Caco-2 (cell line): ENCODE measurements at regions of chr11 and their contacts with region 1.

Region 1: DNA sequence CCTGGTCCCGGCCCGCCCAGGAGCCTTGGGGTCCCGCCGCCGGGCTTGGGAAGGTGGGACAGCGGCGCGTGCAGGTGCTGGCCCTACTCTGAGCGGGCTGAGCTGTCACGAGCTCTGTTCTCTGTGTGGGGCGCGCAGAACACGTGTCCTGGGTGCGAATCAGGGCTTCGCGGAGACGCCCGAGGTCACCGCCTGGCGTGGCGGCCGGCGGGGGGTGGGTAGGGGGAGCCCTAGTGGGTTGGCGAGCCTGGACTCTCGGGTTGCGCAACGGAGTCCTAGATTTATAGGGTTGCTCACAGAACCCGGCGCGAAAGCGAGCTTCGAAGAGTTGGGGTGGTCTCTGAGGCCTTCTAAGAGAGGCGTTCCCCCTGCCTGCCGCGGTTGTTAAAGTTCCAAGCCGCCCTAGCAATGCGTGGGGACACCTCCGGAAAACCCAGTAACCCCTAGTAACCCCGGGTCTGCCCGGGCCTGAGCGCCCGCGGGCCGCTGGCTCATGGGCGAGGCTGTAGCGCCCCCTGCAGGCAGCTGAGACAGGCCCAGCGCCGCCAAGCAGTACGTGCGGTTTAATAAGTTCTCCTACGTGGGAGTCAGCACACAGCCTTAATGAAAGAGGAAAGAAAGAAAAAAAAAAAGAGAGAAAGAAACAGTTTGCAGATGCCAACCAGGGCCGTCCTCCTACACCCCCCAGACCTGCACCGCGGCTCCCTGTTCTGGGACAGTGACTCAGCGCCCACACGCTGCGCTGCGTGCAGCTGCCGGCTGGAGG is 2.8 kb downstream of the ADM start:
- DNase-seq: peak; percentile 83 to 90
- H3K4me3 ChIP-seq: peak overlapping the region; percentile 64
- H3K4me3 Mint-ChIP-seq: peak overlapping the region; percentile 85
- H3K27ac Mint-ChIP-seq: peak overlapping the region; percentile 81
- H3K4me1 ChIP-seq: peaks cover 28% of the 10 kb centered on the region
- H3K4me1 Mint-ChIP-seq: peaks cover 36% of the 10 kb centered on the region
- H3K27me3 ChIP-seq: no peaks in the 10 kb centered on the region
- H3K27me3 Mint-ChIP-seq: peaks cover 3% of the 10 kb centered on the region
- CTCF ChIP-seq: peak; percentile 88 to 97

Region 2: DNA sequence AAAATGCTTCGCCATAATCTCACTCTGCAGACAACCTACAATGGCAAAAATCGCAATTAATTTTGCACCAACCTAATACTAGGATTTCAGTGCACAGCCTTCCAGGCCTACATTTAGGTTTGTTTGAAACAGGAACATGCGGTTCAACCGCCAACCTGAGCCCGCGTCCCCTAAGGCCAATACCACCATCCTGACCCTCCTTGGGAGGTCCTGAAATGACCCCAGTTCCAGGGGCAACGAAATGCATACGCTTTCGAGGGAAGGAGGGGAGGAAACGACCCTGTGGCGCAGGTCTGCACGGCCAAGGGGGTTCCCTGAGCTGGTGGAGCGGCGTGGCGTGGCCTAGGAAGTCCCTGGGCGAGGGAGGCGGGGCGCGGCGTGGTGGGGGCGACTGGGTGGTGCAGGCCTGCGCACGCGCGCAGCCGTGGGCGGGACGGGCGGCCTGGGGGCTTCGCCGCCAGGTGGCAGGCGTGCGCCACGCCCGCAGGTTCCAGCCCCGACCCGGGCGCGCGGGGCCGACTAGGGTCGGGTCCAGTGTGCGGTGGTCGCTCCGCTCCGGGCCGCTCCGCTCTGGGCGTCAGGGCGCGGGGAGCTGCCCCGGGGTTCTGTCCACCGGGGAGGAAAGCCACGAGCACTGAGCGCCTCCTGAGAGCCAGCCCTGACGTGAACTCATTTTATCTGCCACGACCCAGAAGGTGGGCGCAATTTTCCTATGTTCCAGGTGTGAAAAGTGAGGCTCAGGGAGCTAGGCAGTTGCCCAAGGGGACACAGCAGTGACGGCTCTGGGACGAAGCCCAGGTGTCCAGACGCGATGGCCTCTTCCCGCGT is 549.6 kb before region 1 on chr11:
- CTCF ChIA-PET with region 1: interaction called, 6 read pairs
- POLR2A ChIA-PET with region 1: interaction called, 6 read pairs
- intact Hi-C with region 1: loop called (anchors 1 kb)
- DNase-seq: peak; percentile 88 to 93
- H3K4me3 ChIP-seq: peak overlapping the region; percentile 70
- H3K4me3 Mint-ChIP-seq: peak overlapping the region; percentile 86
- H3K27ac Mint-ChIP-seq: peak overlapping the region; percentile 68
- H3K4me1 ChIP-seq: peaks cover 13% of the 10 kb centered on the region
- H3K4me1 Mint-ChIP-seq: peaks cover 32% of the 10 kb centered on the region
- H3K27me3 ChIP-seq: no peaks in the 10 kb centered on the region
- H3K27me3 Mint-ChIP-seq: no peaks in the 10 kb centered on the region
- CTCF ChIP-seq: peak; percentile 43 to 79

Region 3: GRCh38 chr11:10134975-10135481 is 172.6 kb before region 1 on chr11:
- CTCF ChIA-PET with region 1: no interaction called
- POLR2A ChIA-PET with region 1: no interaction called
- intact Hi-C with region 1: no loop called
- DNase-seq: no peak
- H3K4me3 ChIP-seq: no peak overlapping the region
- H3K4me3 Mint-ChIP-seq: no peak overlapping the region
- H3K27ac Mint-ChIP-seq: no peak overlapping the region
- H3K4me1 ChIP-seq: no peaks in the 10 kb centered on the region
- H3K4me1 Mint-ChIP-seq: peaks cover 6% of the 10 kb centered on the region
- H3K27me3 ChIP-seq: no peaks in the 10 kb centered on the region
- H3K27me3 Mint-ChIP-seq: no peaks in the 10 kb centered on the region
- CTCF ChIP-seq: no peak

Region 4: DNA sequence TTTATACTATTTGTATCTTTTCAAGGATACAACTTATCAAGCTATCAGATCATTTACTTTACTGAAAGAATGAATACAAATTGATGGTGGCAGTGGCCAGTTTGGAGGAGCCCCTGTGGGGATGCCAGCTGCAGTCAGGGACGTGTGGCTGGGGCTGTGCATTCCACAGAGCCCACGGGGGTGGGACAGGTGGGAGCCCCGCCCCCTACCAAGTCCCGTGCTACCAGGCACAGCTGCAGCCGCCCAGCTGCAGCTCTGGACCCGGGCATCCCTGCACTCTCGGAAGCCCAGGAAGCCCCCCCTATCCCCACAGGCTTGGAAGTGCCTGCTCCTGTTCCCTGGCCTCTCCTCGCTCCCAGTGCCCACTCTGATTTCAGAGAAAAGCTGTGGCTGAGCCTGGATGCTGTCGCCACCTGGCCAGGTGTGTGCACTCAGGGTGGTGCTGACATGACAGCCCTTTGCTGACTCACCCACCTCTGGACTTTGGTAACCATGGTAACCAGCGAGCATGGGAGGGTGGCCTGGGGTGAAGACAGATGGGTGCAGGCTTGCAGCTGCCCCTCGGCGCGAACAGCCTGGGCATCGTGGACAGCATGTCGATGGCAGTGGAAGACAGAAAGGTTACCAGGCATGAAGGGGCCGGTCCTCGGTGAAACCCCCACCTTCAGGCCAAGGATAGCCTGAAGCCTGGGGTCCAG is 151.7 kb before region 1 on chr11:
- CTCF ChIA-PET with region 1: no interaction called
- POLR2A ChIA-PET with region 1: no interaction called
- intact Hi-C with region 1: no loop called
- DNase-seq: no peak
- H3K4me3 ChIP-seq: no peak overlapping the region
- H3K4me3 Mint-ChIP-seq: no peak overlapping the region
- H3K27ac Mint-ChIP-seq: no peak overlapping the region
- H3K4me1 ChIP-seq: no peaks in the 10 kb centered on the region
- H3K4me1 Mint-ChIP-seq: peaks cover 13% of the 10 kb centered on the region
- H3K27me3 ChIP-seq: no peaks in the 10 kb centered on the region
- H3K27me3 Mint-ChIP-seq: no peaks in the 10 kb centered on the region
- CTCF ChIP-seq: no peak

Region 5: GRCh38 chr11:10208131-10208575 is 99.5 kb before region 1 on chr11:
- CTCF ChIA-PET with region 1: interaction called, 14 read pairs
- POLR2A ChIA-PET with region 1: interaction called, 6 read pairs
- intact Hi-C with region 1: loop called (anchors 1 kb)
- DNase-seq: peak in 1 of 2 experiments; percentile 58
- H3K4me3 ChIP-seq: no peak overlapping the region
- H3K4me3 Mint-ChIP-seq: no peak overlapping the region
- H3K27ac Mint-ChIP-seq: no peak overlapping the region
- H3K4me1 ChIP-seq: no peaks in the 10 kb centered on the region; the same call in 1 of the 2 replicates
- H3K4me1 Mint-ChIP-seq: peaks cover 7% of the 10 kb centered on the region
- H3K27me3 ChIP-seq: no peaks in the 10 kb centered on the region
- H3K27me3 Mint-ChIP-seq: no peaks in the 10 kb centered on the region
- CTCF ChIP-seq: peak; percentile 64 to 70

Region 6: DNA sequence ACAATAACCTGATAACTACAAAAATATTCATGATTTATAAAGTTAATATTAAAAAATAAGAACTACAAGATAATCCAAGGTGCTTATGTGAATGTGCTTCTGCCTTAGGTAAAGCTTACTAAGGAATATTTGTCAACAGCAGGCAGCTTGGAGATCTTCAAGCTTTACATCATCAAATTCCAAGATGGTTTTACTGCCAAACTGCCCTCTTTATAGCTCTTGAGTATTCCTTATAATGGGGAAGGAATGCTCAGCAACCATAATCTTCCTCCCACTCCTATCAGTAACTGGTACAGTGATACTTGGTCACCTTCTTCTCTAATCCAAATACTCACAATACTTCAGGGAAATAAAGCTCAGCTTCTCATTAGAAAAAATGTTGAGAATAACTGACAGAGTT is 43.7 kb before region 1 on chr11:
- CTCF ChIA-PET with region 1: no interaction called
- POLR2A ChIA-PET with region 1: no interaction called
- intact Hi-C with region 1: no loop called
- DNase-seq: no peak
- H3K4me3 ChIP-seq: no peak overlapping the region
- H3K4me3 Mint-ChIP-seq: no peak overlapping the region
- H3K27ac Mint-ChIP-seq: no peak overlapping the region
- H3K4me1 ChIP-seq: peaks cover 11% of the 10 kb centered on the region
- H3K4me1 Mint-ChIP-seq: peaks cover 1% of the 10 kb centered on the region
- H3K27me3 ChIP-seq: no peaks in the 10 kb centered on the region
- H3K27me3 Mint-ChIP-seq: no peaks in the 10 kb centered on the region
- CTCF ChIP-seq: no peak

Region 7: GRCh38 chr11:10328314-10329090 is 20.9 kb after region 1 on chr11:
- CTCF ChIA-PET with region 1: interaction called, 34 read pairs
- POLR2A ChIA-PET with region 1: interaction called, 7 read pairs
- intact Hi-C with region 1: loop called (anchors 1 kb)
- DNase-seq: peak; percentile 66 to 73
- H3K4me3 ChIP-seq: no peak overlapping the region
- H3K4me3 Mint-ChIP-seq: peak overlapping the region; percentile 39
- H3K27ac Mint-ChIP-seq: peak overlapping the region; percentile 14
- H3K4me1 ChIP-seq: peaks cover 63% of the 10 kb centered on the region
- H3K4me1 Mint-ChIP-seq: peaks cover 36% of the 10 kb centered on the region
- H3K27me3 ChIP-seq: no peaks in the 10 kb centered on the region
- H3K27me3 Mint-ChIP-seq: no peaks in the 10 kb centered on the region
- CTCF ChIP-seq: no peak

Region 8: DNA sequence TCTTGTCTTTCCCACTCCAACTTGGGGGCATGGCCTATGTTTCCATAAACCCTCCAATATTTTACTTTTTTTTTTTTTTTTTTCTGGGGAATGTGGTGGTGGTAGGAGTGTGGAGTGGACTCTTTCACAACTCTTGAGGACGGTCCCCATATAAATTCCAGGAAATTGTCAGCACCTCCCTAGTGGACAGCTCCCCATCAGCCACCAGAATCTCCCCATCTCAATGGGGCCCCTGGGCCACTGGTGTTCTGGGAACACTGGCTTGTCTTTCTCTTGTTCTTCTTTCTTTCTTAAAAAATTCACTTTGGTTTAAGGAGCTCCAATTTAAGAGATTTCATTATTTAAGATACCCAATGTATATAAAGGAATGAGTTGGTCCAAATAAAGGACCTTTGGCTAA is 71.4 kb after region 1 on chr11:
- CTCF ChIA-PET with region 1: no interaction called
- POLR2A ChIA-PET with region 1: interaction called, 12 read pairs
- intact Hi-C with region 1: no loop called
- DNase-seq: peak in 1 of 2 experiments; percentile 71
- H3K4me3 ChIP-seq: no peak overlapping the region
- H3K4me3 Mint-ChIP-seq: no peak overlapping the region
- H3K27ac Mint-ChIP-seq: no peak overlapping the region
- H3K4me1 ChIP-seq: peaks cover 5% of the 10 kb centered on the region; the same call in 1 of the 2 replicates
- H3K4me1 Mint-ChIP-seq: peaks cover 5% of the 10 kb centered on the region
- H3K27me3 ChIP-seq: no peaks in the 10 kb centered on the region
- H3K27me3 Mint-ChIP-seq: no peaks in the 10 kb centered on the region
- CTCF ChIP-seq: no peak

Region 9: DNA sequence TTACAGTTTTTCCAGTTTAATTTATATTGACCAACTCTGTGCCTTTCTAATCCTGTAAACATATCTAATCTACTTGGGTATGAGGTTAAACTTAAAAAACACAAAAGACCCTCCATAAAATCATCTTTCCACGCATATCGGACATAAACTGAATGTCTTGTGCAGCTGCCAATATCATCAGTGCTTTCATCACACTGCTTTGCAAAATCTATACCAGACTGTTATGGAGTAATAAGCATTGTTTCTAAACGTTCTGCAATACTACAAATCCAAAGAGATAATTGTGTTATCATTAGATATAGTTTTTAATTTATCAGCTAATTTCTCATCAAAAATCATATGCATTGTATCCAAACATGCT is 111.3 kb after region 1 on chr11:
- CTCF ChIA-PET with region 1: no interaction called
- POLR2A ChIA-PET with region 1: no interaction called
- intact Hi-C with region 1: no loop called
- DNase-seq: no peak
- H3K4me3 ChIP-seq: no peak overlapping the region
- H3K4me3 Mint-ChIP-seq: no peak overlapping the region
- H3K27ac Mint-ChIP-seq: no peak overlapping the region
- H3K4me1 ChIP-seq: no peaks in the 10 kb centered on the region
- H3K4me1 Mint-ChIP-seq: no peaks in the 10 kb centered on the region
- H3K27me3 ChIP-seq: no peaks in the 10 kb centered on the region
- H3K27me3 Mint-ChIP-seq: no peaks in the 10 kb centered on the region
- CTCF ChIP-seq: no peak